ENCODE measurements at regions of chr4 and their contacts with region 1.

Region 1: DNA sequence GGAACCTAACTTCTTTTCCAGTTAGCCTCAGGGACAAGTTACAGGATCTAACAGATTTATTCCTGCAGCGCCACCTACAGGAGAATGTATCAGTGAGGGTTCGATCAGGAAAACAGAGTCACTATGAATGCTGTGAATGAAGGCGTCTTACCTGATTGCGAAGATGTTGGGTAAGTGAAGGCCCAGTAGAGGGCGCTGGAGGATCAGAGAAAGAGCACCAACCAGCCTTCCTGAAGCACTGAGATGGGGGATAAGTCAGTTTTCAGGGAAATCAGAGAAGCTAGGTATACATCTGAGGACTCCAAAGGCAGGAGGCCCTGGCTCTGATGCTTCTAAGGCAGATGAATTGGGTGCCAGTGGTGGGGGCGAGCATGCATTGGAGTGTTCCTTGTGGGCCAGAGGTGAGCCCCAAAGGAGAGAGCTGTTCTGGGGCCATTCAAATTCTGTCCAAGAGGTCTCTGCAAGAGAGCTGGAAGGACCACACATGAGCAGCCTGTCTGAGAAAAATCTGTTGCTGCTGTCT is 169.9 kb upstream of the AADAT start:
- DNase-seq: peak; percentile 61
- H3K4me3 ChIP-seq: peak overlapping the region in 1 of 2 experiments; percentile 57; a peak in 1 of 4 replicates
- H3K27ac ChIP-seq: no peak overlapping the region
- H3K4me1 ChIP-seq: no peaks in the 10 kb centered on the region
- H3K27me3 ChIP-seq: peaks cover 4% of the 10 kb centered on the region; the same call in 1 of the 2 replicates
- CTCF ChIP-seq: peak; percentile 100
- EP300 ChIP-seq: no peak
- RAD21 ChIP-seq: peak; percentile 96

Region 2: DNA sequence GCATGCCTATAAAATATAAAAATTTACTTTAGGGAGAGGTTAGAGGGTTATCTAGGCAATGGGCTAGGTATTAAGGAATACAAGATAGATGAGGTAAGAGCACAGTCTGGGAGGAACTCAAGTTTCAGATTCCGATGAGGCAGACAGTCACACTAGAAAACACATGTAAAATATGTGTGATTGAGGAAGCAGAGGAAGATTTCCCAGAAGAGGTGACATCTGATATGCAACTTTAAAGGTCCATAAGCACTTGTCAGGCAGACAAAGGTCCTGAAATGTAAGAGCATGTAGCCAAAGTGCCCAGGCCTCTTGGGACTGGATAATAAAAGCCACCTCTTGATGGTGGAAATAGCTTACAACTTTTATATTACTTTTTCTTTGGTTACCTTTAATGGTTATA is 88.8 kb before region 1 on chr4:
- CTCF ChIA-PET with region 1: interaction called, 12 read pairs
- POLR2A ChIA-PET with region 1: no interaction called
- DNase-seq: no peak
- H3K4me3 ChIP-seq: no peak overlapping the region
- H3K27ac ChIP-seq: no peak overlapping the region
- H3K4me1 ChIP-seq: no peaks in the 10 kb centered on the region
- H3K27me3 ChIP-seq: no peaks in the 10 kb centered on the region
- CTCF ChIP-seq: no peak
- EP300 ChIP-seq: no peak
- RAD21 ChIP-seq: no peak

Region 3: GRCh38 chr4:170227928-170228327 is 31.8 kb before region 1 on chr4:
- CTCF ChIA-PET with region 1: interaction called, 14 read pairs
- POLR2A ChIA-PET with region 1: no interaction called
- DNase-seq: no peak
- H3K4me3 ChIP-seq: no peak overlapping the region
- H3K27ac ChIP-seq: no peak overlapping the region
- H3K4me1 ChIP-seq: no peaks in the 10 kb centered on the region
- H3K27me3 ChIP-seq: no peaks in the 10 kb centered on the region; the same call in 1 of the 2 replicates
- CTCF ChIP-seq: peak; percentile 19; the same call in 1 of the 2 replicates
- EP300 ChIP-seq: no peak
- RAD21 ChIP-seq: no peak

Region 4: GRCh38 chr4:170248576-170248975 is 11.1 kb before region 1 on chr4:
- CTCF ChIA-PET with region 1: interaction called, 58 read pairs
- POLR2A ChIA-PET with region 1: no interaction called
- DNase-seq: no peak
- H3K4me3 ChIP-seq: no peak overlapping the region
- H3K27ac ChIP-seq: no peak overlapping the region
- H3K4me1 ChIP-seq: no peaks in the 10 kb centered on the region
- H3K27me3 ChIP-seq: no peaks in the 10 kb centered on the region
- CTCF ChIP-seq: no peak
- EP300 ChIP-seq: no peak
- RAD21 ChIP-seq: no peak

Region 5: GRCh38 chr4:170336238-170336775 is 76.6 kb after region 1 on chr4:
- CTCF ChIA-PET with region 1: no interaction called
- POLR2A ChIA-PET with region 1: no interaction called
- DNase-seq: no peak
- H3K4me3 ChIP-seq: no peak overlapping the region
- H3K27ac ChIP-seq: no peak overlapping the region
- H3K4me1 ChIP-seq: no peaks in the 10 kb centered on the region
- H3K27me3 ChIP-seq: no peaks in the 10 kb centered on the region
- CTCF ChIP-seq: no peak
- EP300 ChIP-seq: no peak
- RAD21 ChIP-seq: no peak

Region 6: DNA sequence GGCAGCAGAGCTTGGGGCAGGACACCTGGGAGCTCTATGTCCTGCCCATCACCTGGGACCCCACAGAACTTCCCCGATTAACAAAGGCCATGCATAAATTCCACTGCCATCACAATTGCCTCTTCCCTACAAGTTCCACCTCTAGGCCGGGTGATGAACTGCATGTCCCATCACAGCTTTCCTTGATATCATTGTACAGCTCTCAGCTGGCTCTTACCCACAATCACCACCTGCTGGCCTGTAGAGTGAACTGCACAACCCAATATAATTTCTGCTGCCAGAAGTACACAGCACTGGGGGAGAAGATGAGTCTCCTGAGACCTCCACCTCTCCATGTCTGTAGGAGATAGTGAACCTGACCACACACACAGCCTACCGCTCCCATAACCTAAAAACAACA is 115.1 kb after region 1 on chr4:
- CTCF ChIA-PET with region 1: interaction called, 23 read pairs
- POLR2A ChIA-PET with region 1: no interaction called
- DNase-seq: peak; percentile 24
- H3K4me3 ChIP-seq: no peak overlapping the region
- H3K27ac ChIP-seq: no peak overlapping the region
- H3K4me1 ChIP-seq: no peaks in the 10 kb centered on the region
- H3K27me3 ChIP-seq: no peaks in the 10 kb centered on the region
- CTCF ChIP-seq: peak; percentile 54
- EP300 ChIP-seq: no peak
- RAD21 ChIP-seq: peak; percentile 51

Measured in SK-N-SH (cell line).